Calu3 (cell line): ENCODE measurements at regions of chr10 and their contacts with region 1.

Region 1: GRCh38 chr10:66627156-66627555 is 298.7 kb upstream of the LRRTM3 start:
- DNase-seq: peak; percentile 54
- H3K4me3 Mint-ChIP-seq: no peak overlapping the region
- H3K27ac Mint-ChIP-seq: no peak overlapping the region
- H3K4me1 Mint-ChIP-seq: no peaks in the 10 kb centered on the region
- H3K27me3 Mint-ChIP-seq: no peaks in the 10 kb centered on the region
- CTCF ChIP-seq: no peak

Region 2: GRCh38 chr10:64977915-64978314 is 1649.2 kb before region 1 on chr10:
- CTCF ChIA-PET with region 1: no interaction called
- intact Hi-C with region 1: loop called (anchors 10 kb)
- DNase-seq: no peak
- H3K4me3 Mint-ChIP-seq: no peak overlapping the region
- H3K27ac Mint-ChIP-seq: no peak overlapping the region
- H3K4me1 Mint-ChIP-seq: no peaks in the 10 kb centered on the region
- H3K27me3 Mint-ChIP-seq: no peaks in the 10 kb centered on the region
- CTCF ChIP-seq: no peak

Region 3: GRCh38 chr10:65341323-65341925 is 1285.7 kb before region 1 on chr10:
- CTCF ChIA-PET with region 1: no interaction called
- intact Hi-C with region 1: loop called (anchors 10 kb)
- DNase-seq: peak; percentile 12
- H3K4me3 Mint-ChIP-seq: no peak overlapping the region
- H3K27ac Mint-ChIP-seq: no peak overlapping the region
- H3K4me1 Mint-ChIP-seq: peaks cover 22% of the 10 kb centered on the region
- H3K27me3 Mint-ChIP-seq: no peaks in the 10 kb centered on the region
- CTCF ChIP-seq: no peak

Region 4: GRCh38 chr10:66880826-66881225 is 253.7 kb after region 1 on chr10:
- CTCF ChIA-PET with region 1: no interaction called
- intact Hi-C with region 1: no loop called
- DNase-seq: no peak
- H3K4me3 Mint-ChIP-seq: no peak overlapping the region
- H3K27ac Mint-ChIP-seq: no peak overlapping the region
- H3K4me1 Mint-ChIP-seq: no peaks in the 10 kb centered on the region
- H3K27me3 Mint-ChIP-seq: no peaks in the 10 kb centered on the region
- CTCF ChIP-seq: no peak